ENCODE measurements at regions of chr10 and their contacts with region 1.

Region 1: GRCh38 chr10:86755740-86756510 is 494 bp upstream of the BMPR1A start:
- DNase-seq: peak; percentile 72
- ATAC-seq: peak; percentile 89
- H3K4me3 Mint-ChIP-seq: peak overlapping the region; percentile 79
- H3K27ac Mint-ChIP-seq: peak overlapping the region; percentile 29; the same call in 1 of the 2 replicates
- H3K4me1 Mint-ChIP-seq: peaks cover 51% of the 10 kb centered on the region
- H3K27me3 Mint-ChIP-seq: no peaks in the 10 kb centered on the region
- CTCF ChIP-seq: no peak

Region 2: DNA sequence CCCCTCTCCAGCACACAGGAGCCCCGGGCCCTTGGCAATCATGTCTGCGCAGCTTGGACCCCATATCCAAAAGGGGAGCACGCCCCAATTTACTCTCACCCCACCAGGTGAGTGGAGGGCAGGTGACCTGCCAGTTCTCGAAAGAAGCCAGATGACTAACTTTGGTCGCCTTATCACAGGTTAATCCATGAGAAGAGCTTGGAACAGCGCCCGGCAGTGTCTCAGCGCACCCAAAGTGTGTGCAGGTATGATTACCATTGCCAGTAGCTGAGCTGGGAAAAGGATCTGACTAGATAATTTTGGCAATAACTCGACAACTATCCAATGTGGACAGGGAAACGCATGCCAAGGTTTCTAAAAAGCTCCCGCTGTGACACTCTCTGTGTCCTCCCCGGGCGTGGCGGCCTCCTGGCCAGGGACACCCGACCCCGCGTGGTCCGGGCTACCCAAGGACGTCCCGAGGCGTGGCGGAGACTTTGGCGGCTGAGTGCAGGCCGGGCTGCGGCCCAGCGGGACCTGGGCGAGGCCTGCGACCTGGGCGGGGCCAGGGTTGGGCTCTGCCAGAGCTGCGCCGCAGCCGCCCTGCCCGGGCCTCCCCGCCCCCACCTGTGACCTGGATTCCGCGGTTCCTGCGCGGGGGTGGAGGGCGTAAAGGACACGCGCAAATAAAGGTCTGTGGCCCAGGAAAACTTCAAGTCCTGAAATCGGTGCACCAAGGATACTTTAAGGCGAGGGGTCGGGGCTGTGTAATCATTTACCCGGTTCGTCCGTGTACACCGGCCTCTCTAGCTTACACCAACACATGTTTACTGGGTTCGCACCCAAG is 220.7 kb before region 1 on chr10:
- CTCF ChIA-PET with region 1: no interaction called
- POLR2A ChIA-PET with region 1: no interaction called
- DNase-seq: peak; percentile 75
- ATAC-seq: peak; percentile 87
- H3K4me3 Mint-ChIP-seq: peak overlapping the region; percentile 77
- H3K27ac Mint-ChIP-seq: no peak overlapping the region
- H3K4me1 Mint-ChIP-seq: peaks cover 22% of the 10 kb centered on the region
- H3K27me3 Mint-ChIP-seq: peaks cover 28% of the 10 kb centered on the region
- CTCF ChIP-seq: no peak

Region 3: DNA sequence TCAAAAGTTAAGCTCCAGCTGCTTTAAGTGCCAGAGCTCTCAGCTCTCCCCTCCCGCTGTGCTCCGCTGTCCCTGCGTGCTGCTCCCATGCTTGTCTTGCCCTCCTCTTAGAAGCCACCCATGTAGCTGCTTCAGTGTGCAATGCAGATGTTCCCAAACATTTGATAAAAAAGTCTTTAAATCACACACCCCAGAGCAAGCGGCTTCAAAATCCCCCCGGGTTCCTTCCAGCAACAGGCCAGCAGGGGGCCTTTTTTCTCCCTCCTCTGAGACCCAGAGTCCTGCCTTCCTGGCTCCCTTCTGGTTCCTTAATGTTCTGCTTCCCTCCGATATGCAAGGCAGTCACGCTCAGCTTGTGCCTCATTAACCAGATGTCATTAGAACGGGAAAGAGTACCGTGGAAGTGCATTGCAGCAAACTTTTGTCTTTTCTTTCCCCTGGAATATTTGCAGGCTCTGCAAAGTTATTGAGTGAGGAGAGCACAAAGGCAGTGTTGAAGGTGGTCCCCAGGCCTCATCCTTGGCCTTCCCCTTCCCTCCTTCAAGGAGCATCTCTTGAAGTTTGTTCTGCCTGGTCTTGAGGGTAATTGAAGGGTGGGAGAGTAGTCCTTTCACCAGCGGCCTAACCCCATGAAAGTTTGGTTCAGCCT is 62.1 kb before region 1 on chr10:
- CTCF ChIA-PET with region 1: interaction called, 10 read pairs
- POLR2A ChIA-PET with region 1: interaction called, 3 read pairs
- DNase-seq: peak; percentile 64
- ATAC-seq: peak; percentile 68
- H3K4me3 Mint-ChIP-seq: no peak overlapping the region
- H3K27ac Mint-ChIP-seq: no peak overlapping the region; the same call in 1 of the 2 replicates
- H3K4me1 Mint-ChIP-seq: peaks cover 38% of the 10 kb centered on the region
- H3K27me3 Mint-ChIP-seq: peaks cover 6% of the 10 kb centered on the region; the same call in 1 of the 2 replicates
- CTCF ChIP-seq: no peak; the same call in 1 of the 2 replicates

Region 4: GRCh38 chr10:86782701-86783418 is 26.9 kb after region 1 on chr10:
- CTCF ChIA-PET with region 1: no interaction called
- POLR2A ChIA-PET with region 1: no interaction called
- DNase-seq: no peak
- ATAC-seq: no peak
- H3K4me3 Mint-ChIP-seq: no peak overlapping the region
- H3K27ac Mint-ChIP-seq: peak overlapping the region; percentile 81
- H3K4me1 Mint-ChIP-seq: peaks cover 32% of the 10 kb centered on the region
- H3K27me3 Mint-ChIP-seq: no peaks in the 10 kb centered on the region
- CTCF ChIP-seq: no peak

Measured in WTC11 (cell line).